Activated CD8-positive, alpha-beta T cell treated with anti-CD3 and anti-CD28 coated beads for 36 hours (primary cell): ENCODE measurements at regions of chr3 and their contacts with region 1.

Region 1: DNA sequence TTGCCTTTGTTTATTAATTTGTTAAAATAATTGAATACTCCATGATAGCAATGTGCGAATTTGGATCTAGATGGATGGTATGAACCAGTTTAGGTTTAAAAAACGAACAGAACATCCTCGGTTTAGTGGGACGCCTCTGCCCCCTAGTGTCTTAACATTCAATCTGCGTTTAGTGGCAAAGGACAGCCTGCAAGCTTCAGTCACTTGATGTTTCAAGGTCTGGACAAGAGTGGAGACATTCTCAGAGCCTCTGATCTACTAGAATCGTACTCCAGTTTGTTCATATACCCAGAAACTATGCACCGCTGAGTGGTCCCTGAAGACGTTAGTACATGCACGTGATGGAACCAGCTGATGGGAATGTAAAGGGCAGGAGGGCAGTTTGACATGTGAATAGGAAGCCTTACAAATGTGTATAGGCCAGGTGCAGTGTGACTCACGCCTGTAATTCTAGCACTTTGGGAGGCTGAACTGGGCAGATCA is 17.8 kb upstream of the ATP13A4 start:
- DNase-seq: peak; percentile 63
- ATAC-seq: peak; percentile 73
- H3K4me3 Mint-ChIP-seq: no peak overlapping the region
- H3K27ac Mint-ChIP-seq: no peak overlapping the region
- H3K4me1 Mint-ChIP-seq: no peaks in the 10 kb centered on the region
- H3K27me3 Mint-ChIP-seq: no peaks in the 10 kb centered on the region
- CTCF ChIP-seq: peak; percentile 78

Region 2: GRCh38 chr3:193465992-193466608 is 106.4 kb before region 1 on chr3:
- CTCF ChIA-PET with region 1: interaction called, 7 read pairs
- POLR2A ChIA-PET with region 1: no interaction called
- intact Hi-C with region 1: loop called (anchors 2 kb)
- DNase-seq: no peak
- ATAC-seq: no peak
- H3K4me3 Mint-ChIP-seq: no peak overlapping the region
- H3K27ac Mint-ChIP-seq: no peak overlapping the region
- H3K4me1 Mint-ChIP-seq: no peaks in the 10 kb centered on the region
- H3K27me3 Mint-ChIP-seq: no peaks in the 10 kb centered on the region
- CTCF ChIP-seq: no peak